ENCODE measurements at regions of chr4 and their contacts with region 1.

Region 1: DNA sequence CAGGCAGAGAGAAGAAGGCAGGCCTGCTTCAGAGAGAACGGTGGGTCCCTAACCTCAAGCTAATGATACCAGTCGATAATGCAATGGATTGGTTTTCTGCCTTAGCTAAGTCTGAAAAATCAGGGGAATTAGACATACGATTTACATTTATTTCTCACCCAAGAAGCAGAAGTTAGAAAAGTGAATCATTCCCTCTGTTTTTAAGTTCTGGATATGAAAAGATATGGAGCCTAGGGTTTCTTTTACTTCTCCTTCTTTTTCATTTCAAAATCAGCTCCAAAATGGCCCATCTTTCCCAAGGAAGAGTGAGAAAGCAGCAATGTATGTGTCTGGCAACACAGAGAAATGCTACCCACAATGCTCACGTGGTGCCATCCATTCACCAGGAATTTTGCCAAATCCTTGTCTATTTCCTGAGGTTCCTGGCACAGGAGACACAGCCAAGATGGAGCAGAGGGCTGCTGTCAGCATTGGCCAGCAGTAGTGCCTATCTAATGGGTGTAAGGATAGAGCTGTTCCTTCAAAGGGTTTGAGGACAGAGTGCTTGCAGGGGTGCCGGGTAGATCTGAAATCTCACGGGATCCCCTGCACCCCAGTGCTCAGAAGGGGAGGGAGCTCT is 231.5 kb downstream of the MAML3 start:
- DNase-seq: no peak
- H3K4me3 ChIP-seq: no peak overlapping the region
- H3K27ac ChIP-seq: peak overlapping the region; percentile 89
- H3K4me1 ChIP-seq: peaks cover 76% of the 10 kb centered on the region
- H3K27me3 ChIP-seq: no peaks in the 10 kb centered on the region
- CTCF ChIP-seq: no peak

Region 2: GRCh38 chr4:139969635-139970266 is 47.2 kb after region 1 on chr4:
- intact Hi-C with region 1: loop called (anchors 5 kb)
- DNase-seq: no peak
- H3K4me3 ChIP-seq: no peak overlapping the region
- H3K27ac ChIP-seq: no peak overlapping the region
- H3K4me1 ChIP-seq: peaks cover 25% of the 10 kb centered on the region
- H3K27me3 ChIP-seq: no peaks in the 10 kb centered on the region
- CTCF ChIP-seq: no peak